IMR-90 (cell line): ENCODE measurements at regions of chr9 and their contacts with region 1.

Region 1: GRCh38 chr9:105021917-105022316 is 94.0 kb upstream of the ABCA1 start:
- DNase-seq: no peak
- ATAC-seq: no peak
- H3K4me3 ChIP-seq: no peak overlapping the region
- H3K27ac ChIP-seq: no peak overlapping the region
- H3K4me1 ChIP-seq: no peaks in the 10 kb centered on the region; the same call in 1 of the 2 replicates
- H3K27me3 ChIP-seq: no peaks in the 10 kb centered on the region
- CTCF ChIP-seq: no peak
- POLR2A ChIP-seq: no peak
- RAD21 ChIP-seq: no peak

Region 2: GRCh38 chr9:105007143-105007542 is 14.8 kb before region 1 on chr9:
- CTCF ChIA-PET with region 1: no interaction called
- POLR2A ChIA-PET with region 1: no interaction called
- dilution Hi-C with region 1: no loop called
- in situ Hi-C with region 1: no loop called
- intact Hi-C with region 1: loop called (anchors 1 kb)
- DNase-seq: peak; percentile 92
- ATAC-seq: peak; percentile 97
- H3K4me3 ChIP-seq: no peak overlapping the region
- H3K27ac ChIP-seq: peak overlapping the region; percentile 86
- H3K4me1 ChIP-seq: peaks cover 7% of the 10 kb centered on the region
- H3K27me3 ChIP-seq: no peaks in the 10 kb centered on the region
- CTCF ChIP-seq: no peak
- POLR2A ChIP-seq: no peak
- RAD21 ChIP-seq: no peak; the same call in 1 of the 2 replicates

Region 3: DNA sequence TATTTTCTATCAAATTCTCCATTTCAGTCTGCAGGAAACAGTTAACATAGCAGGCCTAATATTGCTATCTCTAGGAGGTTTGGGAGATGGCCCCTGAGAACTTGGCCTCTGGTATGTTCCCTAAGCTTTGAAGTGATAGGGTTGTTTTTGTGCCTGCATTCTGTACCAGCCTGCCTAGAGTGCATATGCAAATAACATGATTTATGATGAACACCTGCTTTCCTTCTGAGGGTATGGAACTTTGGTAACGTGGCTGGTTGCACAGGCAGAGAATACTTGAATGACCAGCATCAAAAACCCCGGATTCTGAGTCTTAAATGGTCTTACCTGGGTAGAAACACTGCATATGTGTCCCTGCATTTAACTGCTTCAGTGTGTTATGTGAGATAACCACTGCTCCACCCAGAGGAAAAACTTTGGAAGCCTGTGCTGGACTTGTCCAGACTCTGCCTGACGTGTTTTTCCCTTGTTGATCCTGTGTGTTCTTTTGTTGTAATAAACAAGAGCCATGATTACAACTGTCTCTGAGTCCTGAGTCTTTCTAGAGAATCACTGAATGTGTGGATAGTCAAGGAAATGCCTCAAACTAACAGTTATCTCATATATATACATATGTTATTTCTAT is 17.4 kb after region 1 on chr9:
- CTCF ChIA-PET with region 1: no interaction called
- POLR2A ChIA-PET with region 1: no interaction called
- dilution Hi-C with region 1: no loop called
- in situ Hi-C with region 1: no loop called
- intact Hi-C with region 1: no loop called
- DNase-seq: no peak
- ATAC-seq: no peak
- H3K4me3 ChIP-seq: no peak overlapping the region
- H3K27ac ChIP-seq: no peak overlapping the region
- H3K4me1 ChIP-seq: 0 out of 2 replicates have a peak, but pooled peaks cover 1% of the 10 kb centered on the region
- H3K27me3 ChIP-seq: no peaks in the 10 kb centered on the region
- CTCF ChIP-seq: no peak
- POLR2A ChIP-seq: no peak
- RAD21 ChIP-seq: no peak

Region 4: DNA sequence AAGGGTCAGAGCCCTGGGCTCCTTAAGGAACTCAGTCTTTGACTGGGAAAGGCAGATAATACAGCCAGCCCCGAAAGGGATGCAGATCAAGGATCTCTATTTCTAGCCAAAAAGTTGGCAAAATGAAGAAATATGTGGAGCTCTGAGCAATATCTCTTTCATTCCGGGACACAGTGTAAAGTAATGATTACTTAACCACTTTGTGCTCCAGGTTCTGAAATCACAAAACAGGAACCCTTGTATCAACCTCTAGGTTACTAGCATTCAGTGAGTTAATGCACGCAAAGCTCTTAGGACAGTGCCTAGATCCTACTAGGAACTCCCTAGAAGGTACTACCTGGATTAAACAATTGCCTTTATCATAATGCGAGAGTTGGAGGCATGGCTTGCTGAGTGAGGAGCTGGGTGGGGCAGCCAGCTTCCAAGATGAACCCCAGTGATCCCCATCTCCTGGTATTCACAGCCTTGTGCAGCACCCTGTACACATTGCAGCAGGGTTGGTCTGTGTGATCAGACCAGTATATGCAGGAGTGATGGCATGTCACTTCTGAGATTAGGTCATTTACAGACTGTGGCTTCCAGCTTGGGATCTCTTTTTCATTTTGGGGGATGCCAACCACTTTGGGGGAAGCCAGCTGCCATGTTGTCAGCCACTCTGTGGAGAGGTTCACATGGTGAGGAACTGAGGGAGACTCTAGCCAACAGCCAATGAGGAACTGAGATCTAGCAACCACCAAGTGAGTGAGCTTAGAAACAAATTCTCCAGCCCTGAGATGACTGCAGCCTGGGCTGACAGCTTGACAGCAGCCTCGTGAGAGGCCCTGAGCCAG is 119.4 kb after region 1 on chr9:
- CTCF ChIA-PET with region 1: no interaction called
- POLR2A ChIA-PET with region 1: no interaction called
- dilution Hi-C with region 1: no loop called
- in situ Hi-C with region 1: no loop called
- intact Hi-C with region 1: no loop called
- DNase-seq: no peak
- ATAC-seq: peak; percentile 28
- H3K4me3 ChIP-seq: no peak overlapping the region
- H3K27ac ChIP-seq: no peak overlapping the region
- H3K4me1 ChIP-seq: no peaks in the 10 kb centered on the region; the same call in 1 of the 2 replicates
- H3K27me3 ChIP-seq: 0 out of 2 replicates have a peak, but pooled peaks cover 2% of the 10 kb centered on the region
- CTCF ChIP-seq: no peak
- POLR2A ChIP-seq: no peak
- RAD21 ChIP-seq: no peak